ENCODE measurements at regions of chr5 and their contacts with region 1.

Region 1: GRCh38 chr5:174311531-174312269 is 266.2 kb downstream of the NSG2 start:
- DNase-seq: peak; percentile 29
- H3K4me3 ChIP-seq: peak overlapping the region; percentile 31 to 48 (median 43)
- H3K27ac ChIP-seq: no peak overlapping the region
- H3K4me1 ChIP-seq: peaks cover 3% of the 10 kb centered on the region
- H3K27me3 ChIP-seq: no peaks in the 10 kb centered on the region
- CTCF ChIP-seq: peak; percentile 46 to 78

Region 2: GRCh38 chr5:173625696-173626504 is 685.8 kb before region 1 on chr5:
- CTCF ChIA-PET with region 1: no interaction called
- dilution Hi-C with region 1: no loop called
- in situ Hi-C with region 1: loop called in 1 of 2 experiments (anchors 10 kb)
- intact Hi-C with region 1: no loop called
- DNase-seq: no peak
- H3K4me3 ChIP-seq: no peak overlapping the region
- H3K27ac ChIP-seq: no peak overlapping the region
- H3K4me1 ChIP-seq: no peaks in the 10 kb centered on the region
- H3K27me3 ChIP-seq: no peaks in the 10 kb centered on the region
- CTCF ChIP-seq: peak in 1 of 2 donors; percentile 35

Region 3: GRCh38 chr5:174020397-174021296 is 291.1 kb before region 1 on chr5:
- CTCF ChIA-PET with region 1: no interaction called
- dilution Hi-C with region 1: no loop called
- in situ Hi-C with region 1: loop called in 1 of 2 experiments (anchors 25 kb)
- intact Hi-C with region 1: loop called (anchors 1 kb)
- DNase-seq: peak; percentile 59
- H3K4me3 ChIP-seq: no peak overlapping the region
- H3K27ac ChIP-seq: no peak overlapping the region
- H3K4me1 ChIP-seq: no peaks in the 10 kb centered on the region
- H3K27me3 ChIP-seq: no peaks in the 10 kb centered on the region
- CTCF ChIP-seq: peak in 1 of 2 donors; percentile 57

Region 4: DNA sequence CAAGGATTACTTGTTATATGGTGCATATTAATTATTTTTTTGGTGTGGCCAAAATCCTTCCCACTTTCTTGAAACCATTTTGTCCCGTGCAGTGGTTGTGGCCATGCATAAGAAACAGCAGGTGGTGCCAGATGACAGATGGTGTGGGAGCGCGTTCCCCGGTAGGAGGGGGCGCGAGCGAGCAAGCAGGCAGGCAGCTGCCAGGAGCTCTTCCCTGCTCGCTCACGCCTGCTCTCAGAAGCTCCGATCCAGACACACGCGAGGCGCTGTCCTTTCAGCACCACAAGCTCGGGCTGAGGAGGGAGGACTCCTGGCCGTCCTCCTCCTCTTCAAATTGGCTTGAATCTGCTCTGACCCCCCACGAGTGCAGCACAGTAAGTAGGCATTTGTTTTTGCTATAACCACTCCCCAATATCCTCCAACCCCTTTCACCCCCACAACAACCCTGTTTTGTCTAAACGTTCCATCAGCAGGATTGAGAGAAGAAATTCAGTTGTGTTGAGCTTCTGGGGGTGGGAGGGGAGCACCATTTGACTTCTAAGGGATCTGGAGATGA is 266.2 kb before region 1 on chr5 and contains the start of gene NSG2:
- CTCF ChIA-PET with region 1: interaction called, 8 read pairs
- dilution Hi-C with region 1: no loop called
- in situ Hi-C with region 1: loop called in 1 of 2 experiments (anchors 25 kb)
- intact Hi-C with region 1: loop called (anchors 1 kb)
- DNase-seq: peak; percentile 70
- H3K4me3 ChIP-seq: no peak within 1 kb of the TSS
- H3K27ac ChIP-seq: no peak within 1 kb of the TSS
- H3K4me1 ChIP-seq: no peaks in the 10 kb centered on the region
- H3K27me3 ChIP-seq: no peaks in the 10 kb centered on the region
- CTCF ChIP-seq: peak in 1 of 2 donors; percentile 60
- total RNA-seq, gene NSG2: not detected